ENCODE measurements at regions of chr3 and their contacts with region 1.

Region 1: GRCh38 chr3:58568572-58569286 is 8.5 kb downstream of the FAM107A start:
- DNase-seq: peak; percentile 92
- ATAC-seq: peak; percentile 78

Region 2: DNA sequence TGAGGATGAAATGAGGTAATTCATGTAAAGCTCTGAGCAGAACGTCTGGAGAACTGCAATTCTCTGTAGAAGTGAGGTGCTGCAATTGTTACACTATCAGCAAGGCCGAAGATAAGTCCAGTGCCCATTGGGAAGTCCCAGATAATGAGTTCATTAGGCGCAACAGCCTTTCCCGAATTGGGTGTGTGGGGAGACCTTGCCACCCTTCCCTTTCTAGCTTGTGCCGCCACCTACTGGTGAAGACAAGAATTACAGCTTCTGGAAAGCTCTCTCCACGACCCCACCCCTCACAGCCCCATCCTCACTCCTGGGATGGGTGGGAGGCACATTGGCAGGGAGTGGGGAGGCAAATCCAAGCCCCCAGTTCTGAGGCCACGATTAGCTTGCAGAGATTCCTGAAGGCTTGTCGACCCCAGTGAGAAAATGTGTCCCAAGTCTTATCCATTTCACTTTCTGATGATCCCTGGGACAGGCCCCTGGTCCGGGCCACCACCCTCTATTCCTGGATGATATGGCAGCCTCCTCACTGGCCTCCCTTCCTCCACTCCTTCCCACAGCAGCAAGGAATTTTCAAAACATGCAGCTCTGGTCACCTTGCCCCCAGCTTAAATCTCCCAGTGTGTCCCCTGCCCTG is 61.5 kb after region 1 on chr3:
- intact Hi-C with region 1: loop called (anchors 5 kb)
- DNase-seq: peak; percentile 85
- ATAC-seq: peak; percentile 79

Region 3: DNA sequence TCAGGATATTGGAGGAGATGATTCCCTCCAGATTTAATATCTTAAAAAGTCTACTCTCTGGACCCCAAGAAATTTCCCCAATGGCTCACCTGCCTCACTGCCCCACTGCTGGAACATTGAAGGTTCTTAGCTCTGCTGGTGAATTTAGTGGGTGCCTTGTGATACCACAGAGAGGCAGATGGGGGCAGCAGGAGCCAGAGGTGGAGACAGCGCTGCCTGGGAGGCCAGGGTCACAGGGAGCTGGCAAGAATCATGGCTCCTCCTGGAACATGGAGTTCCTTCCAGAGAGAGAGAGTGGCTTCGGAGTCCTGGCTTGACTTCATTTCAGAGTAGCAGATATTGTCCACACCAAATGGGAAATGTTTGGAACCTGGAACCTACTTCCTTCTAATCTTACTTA is 744.6 kb after region 1 on chr3:
- intact Hi-C with region 1: no loop called
- DNase-seq: no peak
- ATAC-seq: peak; percentile 59